MCF 10A (cell line): ENCODE measurements at regions of chr15 and their contacts with region 1.

Region 1: GRCh38 chr15:41557673-41558399 is 1.2 kb upstream of the TYRO3 start:
- DNase-seq: peak; percentile 55
- H3K4me3 Mint-ChIP-seq: peak overlapping the region; percentile 75
- H3K27ac Mint-ChIP-seq: no peak overlapping the region
- H3K4me1 Mint-ChIP-seq: no peaks in the 10 kb centered on the region
- H3K27me3 Mint-ChIP-seq: no peaks in the 10 kb centered on the region
- CTCF ChIP-seq: peak; percentile 69

Region 2: GRCh38 chr15:41544650-41545015 is 13.2 kb before region 1 on chr15:
- CTCF ChIA-PET with region 1: interaction called, 10 read pairs
- POLR2A ChIA-PET with region 1: interaction called, 4 read pairs
- intact Hi-C with region 1: no loop called
- DNase-seq: peak; percentile 14
- H3K4me3 Mint-ChIP-seq: peak overlapping the region; percentile 87
- H3K27ac Mint-ChIP-seq: peak overlapping the region; percentile 90
- H3K4me1 Mint-ChIP-seq: peaks cover 12% of the 10 kb centered on the region
- H3K27me3 Mint-ChIP-seq: no peaks in the 10 kb centered on the region
- CTCF ChIP-seq: no peak

Region 3: GRCh38 chr15:41585127-41586047 is 27.6 kb after region 1 on chr15:
- CTCF ChIA-PET with region 1: no interaction called
- POLR2A ChIA-PET with region 1: no interaction called
- intact Hi-C with region 1: no loop called
- DNase-seq: no peak
- H3K4me3 Mint-ChIP-seq: no peak overlapping the region
- H3K27ac Mint-ChIP-seq: no peak overlapping the region
- H3K4me1 Mint-ChIP-seq: no peaks in the 10 kb centered on the region
- H3K27me3 Mint-ChIP-seq: peaks cover 10% of the 10 kb centered on the region
- CTCF ChIP-seq: no peak

Region 4: GRCh38 chr15:41603941-41604911 is 46.4 kb after region 1 on chr15:
- CTCF ChIA-PET with region 1: interaction called, 4 read pairs
- POLR2A ChIA-PET with region 1: no interaction called
- intact Hi-C with region 1: loop called (anchors 10 kb)
- DNase-seq: peak; percentile 81
- H3K4me3 Mint-ChIP-seq: peak overlapping the region; percentile 69
- H3K27ac Mint-ChIP-seq: peak overlapping the region; percentile 13
- H3K4me1 Mint-ChIP-seq: peaks cover 16% of the 10 kb centered on the region
- H3K27me3 Mint-ChIP-seq: no peaks in the 10 kb centered on the region
- CTCF ChIP-seq: peak; percentile 55

Region 5: DNA sequence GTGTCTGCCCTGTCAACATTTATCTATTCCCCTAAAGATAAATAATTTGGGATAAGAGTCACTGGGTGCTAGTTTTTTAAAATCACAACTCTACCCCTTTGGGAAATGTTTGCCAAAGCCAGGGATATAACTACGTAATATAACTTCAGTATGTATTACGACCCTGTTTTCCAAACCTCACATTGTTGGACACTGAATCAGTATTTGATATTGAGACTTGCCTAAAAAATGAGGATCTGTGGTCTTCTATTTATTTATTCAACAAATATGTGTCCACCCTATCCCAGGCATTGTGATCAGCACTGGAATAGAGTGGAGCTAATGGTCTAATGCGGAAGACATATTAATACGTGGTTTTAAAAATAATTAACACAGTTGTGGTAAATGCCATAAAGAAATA is 97.9 kb after region 1 on chr15:
- CTCF ChIA-PET with region 1: no interaction called
- POLR2A ChIA-PET with region 1: no interaction called
- intact Hi-C with region 1: no loop called
- DNase-seq: no peak
- H3K4me3 Mint-ChIP-seq: no peak overlapping the region
- H3K27ac Mint-ChIP-seq: no peak overlapping the region
- H3K4me1 Mint-ChIP-seq: peaks cover 1% of the 10 kb centered on the region
- H3K27me3 Mint-ChIP-seq: no peaks in the 10 kb centered on the region
- CTCF ChIP-seq: no peak